Activated CD4-positive, alpha-beta T cell treated with anti-CD3 and anti-CD28 coated beads for 36 hours (primary cell): ENCODE measurements at regions of chr4 and their contacts with region 1.

Region 1: DNA sequence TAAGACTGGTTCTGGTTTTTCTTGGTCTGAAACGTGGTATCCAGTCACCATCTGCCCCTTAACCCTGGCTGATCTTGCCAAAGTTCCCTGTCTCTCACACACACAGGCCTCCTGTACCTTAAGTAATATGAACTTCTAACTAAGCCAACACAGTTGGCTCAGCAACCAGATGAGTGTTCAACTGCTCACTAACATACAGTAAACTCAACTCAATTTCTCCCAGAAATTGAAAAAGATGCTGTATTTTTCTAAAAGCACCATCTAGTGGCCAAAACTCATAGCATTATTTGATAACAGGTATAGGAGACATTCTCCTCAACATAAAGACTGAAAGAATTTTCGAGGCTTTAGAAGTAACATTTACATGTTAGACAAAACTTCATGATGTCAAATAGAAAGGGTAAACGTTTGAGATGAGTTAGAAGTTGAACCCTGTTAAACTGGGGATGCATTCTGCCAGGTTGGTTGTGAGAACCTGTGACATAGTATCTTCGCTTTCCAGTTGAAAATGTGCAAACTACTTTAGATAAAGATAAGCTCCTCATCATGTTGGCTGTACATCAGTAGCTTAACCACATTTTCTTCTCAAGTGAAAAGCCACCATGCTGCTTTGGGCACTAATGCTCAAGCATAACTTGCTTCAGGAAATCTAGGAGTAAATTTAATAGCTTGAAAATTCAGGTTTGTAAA is 31.2 kb downstream of the CCNI start:
- DNase-seq: no peak
- ATAC-seq: peak; percentile 68
- H3K4me3 Mint-ChIP-seq: no peak overlapping the region
- H3K27ac Mint-ChIP-seq: no peak overlapping the region
- H3K4me1 Mint-ChIP-seq: peaks cover 11% of the 10 kb centered on the region
- H3K27me3 Mint-ChIP-seq: no peaks in the 10 kb centered on the region

Region 2: GRCh38 chr4:76430519-76431388 is 613.9 kb before region 1 on chr4:
- CTCF ChIA-PET with region 1: interaction called, 6 read pairs
- POLR2A ChIA-PET with region 1: no interaction called
- intact Hi-C with region 1: loop called (anchors 1 to 5 kb)
- DNase-seq: peak; percentile 6
- ATAC-seq: peak; percentile 49
- H3K4me3 Mint-ChIP-seq: no peak overlapping the region
- H3K27ac Mint-ChIP-seq: no peak overlapping the region
- H3K4me1 Mint-ChIP-seq: no peaks in the 10 kb centered on the region
- H3K27me3 Mint-ChIP-seq: peaks cover 20% of the 10 kb centered on the region

Region 3: DNA sequence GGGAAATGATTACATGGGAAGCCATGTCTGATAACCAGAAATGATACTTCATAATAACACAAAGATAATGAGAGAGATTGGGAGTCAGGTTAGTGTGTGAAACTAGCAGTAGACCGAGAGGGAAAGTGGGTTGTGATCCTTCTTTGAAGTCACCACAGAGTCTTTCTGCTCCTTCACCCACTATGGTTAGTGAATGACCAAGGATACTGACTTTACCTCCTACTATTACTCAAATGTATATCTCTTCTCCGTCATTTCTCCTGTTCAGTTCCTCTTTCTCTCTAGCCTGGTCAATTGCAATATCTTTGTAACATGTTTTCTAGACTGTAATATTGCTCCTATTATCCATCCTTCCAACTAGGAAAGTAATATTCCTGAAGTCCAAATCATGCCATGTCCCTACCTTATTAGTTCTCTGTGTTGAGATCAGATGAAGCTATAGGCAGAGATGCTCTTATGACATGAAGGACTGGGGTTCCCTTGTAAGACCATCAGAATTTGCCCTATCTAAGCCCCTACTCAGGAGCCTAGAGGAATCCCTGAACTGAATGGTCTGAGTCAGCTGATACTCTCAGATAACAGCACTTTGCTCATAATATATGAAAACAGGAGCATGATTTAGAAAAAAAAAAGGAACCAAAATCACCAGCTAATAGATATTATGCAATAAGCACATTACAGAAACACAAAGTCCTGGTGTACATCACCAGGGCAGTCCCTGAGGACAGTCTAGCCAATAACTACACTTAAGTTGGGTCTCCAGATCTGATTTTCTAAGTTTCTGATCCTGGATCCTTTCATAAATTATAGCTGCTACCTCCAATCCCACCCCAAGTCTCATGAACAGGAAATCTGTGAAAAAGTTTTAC is 528.4 kb before region 1 on chr4:
- CTCF ChIA-PET with region 1: interaction called, 4 read pairs
- POLR2A ChIA-PET with region 1: no interaction called
- intact Hi-C with region 1: loop called in 1 of 2 experiments (anchors 2 kb)
- DNase-seq: no peak
- ATAC-seq: no peak
- H3K4me3 Mint-ChIP-seq: no peak overlapping the region
- H3K27ac Mint-ChIP-seq: no peak overlapping the region
- H3K4me1 Mint-ChIP-seq: no peaks in the 10 kb centered on the region
- H3K27me3 Mint-ChIP-seq: no peaks in the 10 kb centered on the region

Region 4: DNA sequence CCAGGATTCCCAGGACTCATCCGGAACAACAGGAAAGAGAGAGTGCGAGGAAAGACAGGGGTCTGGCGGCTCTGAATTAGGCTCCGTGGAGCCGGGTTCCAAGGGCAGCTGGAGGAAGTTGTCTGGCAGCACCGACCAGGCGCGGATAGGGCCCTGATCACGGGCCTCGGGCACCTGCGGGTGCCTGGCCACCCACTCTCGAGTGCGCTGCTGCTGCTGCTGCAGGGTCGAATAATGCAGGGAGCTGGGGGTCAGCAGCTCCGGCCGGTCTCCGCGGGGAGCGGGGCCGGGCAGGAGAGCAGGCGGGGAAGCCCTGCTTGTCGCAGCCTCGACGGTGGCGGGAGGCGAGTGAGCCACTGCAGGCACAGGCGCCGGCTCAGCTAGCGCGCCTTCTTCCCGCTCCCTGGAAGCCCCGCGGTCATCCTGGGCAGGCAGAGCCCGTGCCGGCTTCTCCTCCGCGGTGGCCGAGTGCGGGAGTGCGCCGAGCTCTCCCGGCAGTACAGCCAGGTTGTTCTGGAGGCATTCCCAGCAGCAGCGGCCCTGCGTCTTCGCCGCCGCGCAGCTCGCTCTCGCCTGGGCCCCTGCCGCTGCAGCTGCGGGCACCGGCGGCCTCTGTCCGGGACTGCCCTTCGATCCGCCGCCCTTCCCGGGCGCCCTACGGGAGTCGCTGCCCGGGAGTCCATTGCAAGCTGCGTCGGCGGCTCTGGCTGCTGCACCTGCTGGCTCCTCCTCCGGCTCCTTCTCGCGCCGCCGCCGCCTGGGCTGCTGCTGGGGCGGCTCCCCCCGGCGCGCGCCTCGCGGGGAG is 147.7 kb before region 1 on chr4:
- CTCF ChIA-PET with region 1: no interaction called
- POLR2A ChIA-PET with region 1: no interaction called
- intact Hi-C with region 1: loop called in 1 of 2 experiments (anchors 5 kb)
- DNase-seq: peak; percentile 51
- ATAC-seq: peak; percentile 47
- H3K4me3 Mint-ChIP-seq: no peak overlapping the region
- H3K27ac Mint-ChIP-seq: no peak overlapping the region
- H3K4me1 Mint-ChIP-seq: peaks cover 9% of the 10 kb centered on the region
- H3K27me3 Mint-ChIP-seq: peaks cover 45% of the 10 kb centered on the region

Region 5: DNA sequence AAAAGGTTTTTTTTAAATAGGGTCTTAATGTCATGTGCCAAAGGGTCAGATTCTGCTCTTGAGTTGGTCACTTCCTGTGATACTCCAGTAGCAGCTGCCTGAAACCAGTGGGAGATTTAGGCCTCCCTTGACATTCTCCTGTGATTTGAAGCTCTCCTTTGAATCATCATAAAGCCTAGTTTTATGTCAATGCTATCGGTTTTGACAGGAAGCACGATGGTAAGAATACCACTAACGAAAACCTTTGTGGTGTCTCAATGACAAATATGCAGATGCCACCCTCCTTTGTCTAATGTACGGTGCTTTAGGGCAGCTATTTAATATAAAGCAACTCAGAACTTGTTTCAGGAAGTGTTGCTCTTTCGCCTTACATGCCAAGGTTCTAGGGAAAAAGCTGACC is 13.1 kb before region 1 on chr4:
- CTCF ChIA-PET with region 1: interaction called, 14 read pairs
- POLR2A ChIA-PET with region 1: no interaction called
- intact Hi-C with region 1: no loop called
- DNase-seq: peak; percentile 24
- ATAC-seq: peak; percentile 78
- H3K4me3 Mint-ChIP-seq: no peak overlapping the region
- H3K27ac Mint-ChIP-seq: no peak overlapping the region
- H3K4me1 Mint-ChIP-seq: peaks cover 44% of the 10 kb centered on the region
- H3K27me3 Mint-ChIP-seq: peaks cover 13% of the 10 kb centered on the region

Region 6: DNA sequence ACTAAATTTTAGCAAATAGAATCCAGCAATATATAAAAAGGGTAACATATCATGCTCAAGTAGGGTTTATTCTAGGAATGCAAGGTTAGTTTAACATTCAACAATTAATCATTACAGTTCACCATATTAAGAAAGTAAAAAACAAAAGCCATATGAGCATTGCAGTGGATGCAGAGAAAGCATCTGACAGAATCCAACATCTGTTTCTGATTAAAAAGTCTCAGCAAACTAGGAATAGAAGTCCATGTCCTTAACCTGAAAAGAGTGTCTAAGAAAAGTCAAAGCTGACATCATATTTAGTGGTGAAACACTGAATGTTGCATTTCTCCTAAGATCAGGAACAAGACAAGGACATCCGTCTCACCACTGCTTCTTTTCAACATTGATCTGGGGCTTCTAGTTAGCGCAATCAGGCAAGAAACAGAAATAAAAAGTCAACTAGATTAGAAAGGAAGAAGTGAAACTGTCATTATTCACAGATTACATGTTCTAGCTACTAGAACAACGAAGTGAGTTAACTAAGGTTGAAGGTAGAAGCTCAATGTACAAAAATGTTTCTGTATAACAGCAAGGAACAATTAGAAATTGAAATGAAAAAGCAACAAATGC is 867.3 kb after region 1 on chr4:
- CTCF ChIA-PET with region 1: no interaction called
- POLR2A ChIA-PET with region 1: no interaction called
- intact Hi-C with region 1: no loop called
- DNase-seq: no peak
- ATAC-seq: no peak
- H3K4me3 Mint-ChIP-seq: no peak overlapping the region
- H3K27ac Mint-ChIP-seq: no peak overlapping the region
- H3K4me1 Mint-ChIP-seq: peaks cover 3% of the 10 kb centered on the region
- H3K27me3 Mint-ChIP-seq: no peaks in the 10 kb centered on the region